GM13977 (cell line): ENCODE measurements at regions of chr12 and their contacts with region 1.

Region 1: DNA sequence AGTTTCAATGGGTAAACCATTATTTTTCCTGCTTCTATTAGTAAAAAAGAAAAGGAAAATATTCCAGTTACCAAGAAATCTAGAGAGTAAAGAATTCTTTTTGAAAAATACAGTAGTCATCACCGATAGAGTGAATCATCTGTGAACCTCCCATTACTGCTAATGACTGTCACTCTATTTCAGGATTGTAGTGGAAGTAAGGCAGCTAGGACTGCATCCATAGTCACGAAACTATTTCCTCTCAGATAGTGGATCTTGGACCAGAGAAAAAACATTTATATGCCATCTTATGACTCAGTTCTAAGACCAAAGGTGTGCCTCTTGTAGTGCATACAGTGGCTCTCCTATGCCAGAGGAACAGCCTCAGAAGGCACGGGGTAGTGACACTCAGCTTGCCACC is 173.9 kb upstream of the PLEKHA5 start:
- DNase-seq: no peak
- CTCF ChIP-seq: no peak

Region 2: GRCh38 chr12:19058235-19059021 is 102.8 kb after region 1 on chr12:
- in situ Hi-C with region 1: loop called (anchors 25 kb)
- DNase-seq: no peak
- CTCF ChIP-seq: no peak

Region 3: DNA sequence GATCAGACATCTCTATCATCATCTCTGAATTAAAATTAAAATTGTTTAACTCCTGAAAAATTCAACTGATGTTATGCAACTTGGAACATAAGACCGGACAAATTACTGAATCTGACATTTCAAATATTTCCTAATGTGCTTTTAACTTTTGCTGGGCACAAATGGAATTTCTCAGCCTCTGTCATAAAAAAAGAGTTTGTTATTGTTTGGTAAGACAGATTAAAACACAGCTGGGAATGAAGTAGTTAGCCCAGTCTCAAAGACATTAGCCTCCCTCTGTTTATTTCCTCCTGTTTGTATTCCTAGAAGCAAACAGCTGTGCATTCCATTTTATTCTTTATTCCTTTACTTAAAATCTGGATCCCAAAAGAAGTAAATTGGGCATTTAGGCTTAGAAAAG is 203.3 kb after region 1 on chr12:
- in situ Hi-C with region 1: no loop called
- DNase-seq: no peak
- CTCF ChIP-seq: no peak